Caco-2 (cell line): ENCODE measurements at regions of chrX and their contacts with region 1.

Region 1: DNA sequence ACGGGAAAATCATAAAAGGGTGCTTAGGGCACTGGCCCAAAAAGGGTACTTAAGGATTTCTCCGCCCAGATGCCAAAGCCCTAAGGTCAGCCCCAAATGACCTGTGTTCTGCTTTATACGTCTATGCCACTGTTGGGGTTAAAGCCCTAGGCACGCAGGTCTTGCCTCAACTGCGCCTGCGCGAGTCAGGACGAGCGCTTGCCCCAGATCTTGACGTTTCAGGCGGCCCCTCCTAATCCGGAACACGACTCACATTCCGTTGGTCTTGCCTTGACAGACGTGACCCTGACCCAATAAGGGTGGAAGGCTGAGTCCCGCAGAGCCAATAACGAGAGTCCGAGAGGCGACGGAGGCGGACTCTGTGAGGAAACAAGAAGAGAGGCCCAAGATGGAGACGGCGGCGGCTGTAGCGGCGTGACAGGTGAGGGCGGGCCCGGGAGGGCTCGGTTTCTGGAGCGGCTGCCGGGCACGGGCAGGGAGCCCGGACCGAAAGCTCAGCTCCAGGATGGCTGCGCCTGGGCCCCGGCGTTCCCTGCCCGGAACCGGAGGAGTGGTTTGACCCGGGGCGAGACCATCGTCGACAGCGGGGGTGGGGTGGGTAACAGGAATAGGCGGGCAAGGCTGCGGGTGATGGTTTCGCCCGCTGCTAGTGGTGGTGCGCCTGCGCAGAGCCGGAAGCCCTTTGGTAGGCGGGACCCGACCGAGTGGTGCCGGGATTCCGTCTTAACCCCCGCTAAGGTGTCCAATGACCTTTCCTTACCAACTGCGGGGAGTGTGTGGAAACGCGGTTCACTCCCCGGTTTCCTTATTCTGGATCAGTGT is at the start of gene ARAF:
- DNase-seq: peak; percentile 97 to 99
- H3K4me3 ChIP-seq: peak within 1 kb of the TSS; percentile 64
- H3K4me3 Mint-ChIP-seq: peak within 1 kb of the TSS; percentile 98
- H3K27ac Mint-ChIP-seq: peak within 1 kb of the TSS; percentile 99
- H3K4me1 ChIP-seq: no peaks in the 10 kb centered on the region
- H3K4me1 Mint-ChIP-seq: peaks cover 7% of the 10 kb centered on the region
- H3K27me3 ChIP-seq: no peaks in the 10 kb centered on the region
- H3K27me3 Mint-ChIP-seq: no peaks in the 10 kb centered on the region
- CTCF ChIP-seq: no peak
- total RNA-seq, gene ARAF: 65.4 and 68.5 TPM in 2 replicates

Region 2: DNA sequence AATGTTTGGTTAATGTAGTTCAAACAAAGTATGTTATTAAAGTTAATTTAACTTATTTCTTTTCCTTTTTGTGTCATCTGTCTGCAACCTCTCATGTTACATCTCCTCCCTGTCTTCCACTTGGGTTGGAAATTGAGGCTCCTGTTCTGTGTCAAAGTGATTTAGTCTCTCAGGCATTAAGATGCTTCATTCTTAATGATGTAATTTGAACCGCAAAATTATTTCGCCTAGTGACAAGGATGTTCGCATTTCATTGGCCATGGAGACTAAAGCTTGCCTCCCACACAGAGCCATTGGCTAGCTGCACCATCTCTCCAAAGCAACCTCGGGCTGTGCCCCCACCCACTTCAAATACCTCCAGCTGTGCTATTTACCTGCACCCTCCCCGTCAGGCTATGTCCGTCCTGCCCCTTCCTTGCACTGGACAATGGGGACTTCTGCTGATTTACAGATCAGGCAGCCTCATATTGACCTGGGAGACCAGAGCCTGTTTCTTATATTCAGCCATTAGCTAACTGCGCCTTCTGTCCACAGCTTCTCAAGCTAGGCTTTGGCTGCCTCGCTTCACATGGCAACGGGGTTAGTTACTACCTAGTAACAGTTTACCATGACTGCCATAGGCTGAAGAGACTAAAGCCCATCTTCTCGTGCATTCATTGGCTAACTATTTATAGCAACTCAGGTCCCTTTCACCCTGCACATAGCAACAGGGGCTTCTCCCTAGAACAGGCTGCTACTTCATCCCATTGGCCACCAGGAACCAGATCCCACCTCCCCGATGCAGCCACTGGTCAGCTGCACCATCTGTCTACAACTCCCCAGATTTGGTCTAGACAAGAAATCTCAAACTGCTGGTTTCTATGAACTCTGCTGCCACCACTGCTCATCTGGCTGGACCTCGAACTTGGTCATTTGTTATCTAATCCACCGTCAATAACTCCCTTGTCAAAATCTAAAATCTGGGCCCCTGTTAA is 199.2 kb before region 1 on chrX:
- CTCF ChIA-PET with region 1: no interaction called
- POLR2A ChIA-PET with region 1: no interaction called
- intact Hi-C with region 1: no loop called
- DNase-seq: peak; percentile 66 to 71
- H3K4me3 ChIP-seq: no peak overlapping the region
- H3K4me3 Mint-ChIP-seq: peak overlapping the region; percentile 54
- H3K27ac Mint-ChIP-seq: peak overlapping the region; percentile 42
- H3K4me1 ChIP-seq: no peaks in the 10 kb centered on the region
- H3K4me1 Mint-ChIP-seq: no peaks in the 10 kb centered on the region
- H3K27me3 ChIP-seq: no peaks in the 10 kb centered on the region
- H3K27me3 Mint-ChIP-seq: no peaks in the 10 kb centered on the region
- CTCF ChIP-seq: no peak

Region 3: GRCh38 chrX:47628980-47629379 is 67.9 kb after region 1 on chrX:
- CTCF ChIA-PET with region 1: no interaction called
- POLR2A ChIA-PET with region 1: no interaction called
- intact Hi-C with region 1: loop called (anchors 1 kb)
- DNase-seq: peak; percentile 61 to 62
- H3K4me3 ChIP-seq: no peak overlapping the region
- H3K4me3 Mint-ChIP-seq: no peak overlapping the region
- H3K27ac Mint-ChIP-seq: no peak overlapping the region
- H3K4me1 ChIP-seq: no peaks in the 10 kb centered on the region
- H3K4me1 Mint-ChIP-seq: no peaks in the 10 kb centered on the region
- H3K27me3 ChIP-seq: no peaks in the 10 kb centered on the region
- H3K27me3 Mint-ChIP-seq: no peaks in the 10 kb centered on the region
- CTCF ChIP-seq: peak in 1 of 2 experiments; percentile 19

Region 4: GRCh38 chrX:47644557-47645091 is 83.6 kb after region 1 on chrX:
- CTCF ChIA-PET with region 1: interaction called, 3 read pairs
- POLR2A ChIA-PET with region 1: no interaction called
- intact Hi-C with region 1: loop called (anchors 1 kb)
- DNase-seq: no peak
- H3K4me3 ChIP-seq: no peak overlapping the region
- H3K4me3 Mint-ChIP-seq: no peak overlapping the region
- H3K27ac Mint-ChIP-seq: no peak overlapping the region
- H3K4me1 ChIP-seq: no peaks in the 10 kb centered on the region
- H3K4me1 Mint-ChIP-seq: peaks cover 13% of the 10 kb centered on the region
- H3K27me3 ChIP-seq: no peaks in the 10 kb centered on the region
- H3K27me3 Mint-ChIP-seq: no peaks in the 10 kb centered on the region
- CTCF ChIP-seq: no peak

Region 5: DNA sequence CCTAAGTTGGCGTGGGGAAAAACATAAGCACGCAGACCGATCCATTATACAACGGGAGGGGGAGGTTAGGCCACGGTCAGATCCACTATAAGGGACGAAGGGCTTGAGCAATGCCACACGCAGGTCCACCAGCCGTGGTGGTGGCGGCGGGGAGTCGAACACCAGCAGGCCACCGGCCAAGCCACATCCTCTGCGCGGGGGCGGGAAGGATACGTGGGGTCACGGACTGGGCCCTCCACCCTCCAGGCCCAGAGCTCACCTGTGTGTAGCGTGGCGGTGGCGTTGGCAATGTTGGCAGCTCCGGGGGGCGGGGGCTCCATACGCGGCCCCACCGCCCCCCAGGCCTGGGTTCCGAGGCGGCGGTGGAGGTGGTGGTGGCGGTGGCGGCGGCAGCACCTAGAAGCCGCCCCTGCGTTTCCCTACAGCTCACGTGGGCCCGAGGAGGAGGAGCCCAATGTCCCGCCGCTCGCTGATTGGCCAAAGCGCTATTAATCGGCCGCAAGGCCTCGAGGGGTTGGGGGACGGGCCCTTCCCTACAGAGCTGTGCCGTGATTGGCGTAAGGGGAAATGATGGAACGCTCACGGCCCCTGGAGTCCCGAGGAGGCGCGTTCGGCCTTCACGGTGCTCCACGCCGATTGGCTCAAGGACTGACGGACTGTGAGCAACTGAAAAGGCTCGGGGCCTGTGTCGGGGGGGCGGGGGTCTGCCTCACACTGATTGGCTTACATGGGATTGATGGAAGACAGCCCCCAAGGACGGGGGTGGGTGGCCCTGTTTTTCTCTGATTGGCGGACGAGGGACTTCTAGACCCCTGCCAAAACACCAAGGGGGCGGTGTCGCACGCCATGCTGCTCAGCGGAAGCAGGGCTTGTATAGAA is 89.4 kb after region 1 on chrX and contains the start of gene ELK1:
- CTCF ChIA-PET with region 1: no interaction called
- POLR2A ChIA-PET with region 1: interaction called, 3 read pairs
- intact Hi-C with region 1: loop called (anchors 2 kb)
- DNase-seq: peak; percentile 94 to 97
- H3K4me3 ChIP-seq: peak within 1 kb of the TSS; percentile 63
- H3K4me3 Mint-ChIP-seq: peak within 1 kb of the TSS; percentile 89
- H3K27ac Mint-ChIP-seq: peak within 1 kb of the TSS; percentile 89
- H3K4me1 ChIP-seq: 0 out of 2 replicates have a peak, but pooled peaks cover 3% of the 10 kb centered on the region
- H3K4me1 Mint-ChIP-seq: peaks cover 23% of the 10 kb centered on the region
- H3K27me3 ChIP-seq: no peaks in the 10 kb centered on the region
- H3K27me3 Mint-ChIP-seq: no peaks in the 10 kb centered on the region
- CTCF ChIP-seq: peak in 1 of 2 experiments; percentile 1
- total RNA-seq, gene ELK1: 28.9 and 29.3 TPM in 2 replicates